Transverse colon (tissue), 4 donors: ENCODE measurements at regions of chr3 and their contacts with region 1.

Region 1: DNA sequence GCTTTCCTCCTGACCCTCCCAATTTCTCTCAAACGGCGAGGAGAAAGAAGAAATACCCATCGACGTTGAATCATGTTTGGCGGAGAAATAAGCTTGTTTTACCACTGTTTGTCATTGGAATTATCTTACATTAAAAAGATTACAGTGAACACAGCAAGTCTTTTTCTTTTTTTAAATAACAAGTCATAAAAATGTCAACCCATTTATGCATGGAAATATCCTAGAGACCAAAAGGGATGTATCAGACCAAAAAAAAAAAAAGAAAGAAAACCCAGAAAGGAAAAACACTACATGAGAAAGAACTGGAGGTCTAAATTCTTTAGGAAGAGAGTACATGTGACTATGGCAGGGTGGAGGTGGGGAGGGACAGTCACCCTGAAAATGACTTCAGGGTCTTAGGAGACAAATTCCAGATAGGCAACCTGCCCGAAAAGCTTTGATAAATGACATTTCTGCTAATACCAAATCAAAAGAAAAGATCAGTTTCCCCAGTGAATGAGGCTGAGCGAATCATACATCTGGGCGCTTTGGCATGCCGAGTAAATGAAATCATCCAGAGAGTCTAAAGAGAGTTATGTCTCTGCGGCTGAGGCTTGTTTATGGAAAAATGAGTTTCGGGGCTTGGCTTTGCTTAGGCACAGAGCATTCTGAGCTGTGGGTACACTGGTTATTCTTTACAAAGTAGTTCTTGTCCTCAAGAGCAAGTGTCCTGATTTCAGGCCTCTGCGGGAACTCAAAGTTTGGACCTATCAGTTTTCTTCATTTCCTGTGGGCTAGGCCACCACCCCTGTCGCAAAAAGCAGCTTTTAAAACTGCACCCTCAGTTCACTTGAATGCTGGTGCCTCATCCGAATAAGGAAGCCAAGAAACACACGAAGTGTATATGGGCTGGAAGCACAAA is 110.1 kb upstream of the TGFBR2 start:
- DNase-seq: peak; percentile 24
- H3K4me3 ChIP-seq: no peak overlapping the region
- H3K27ac ChIP-seq: peak overlapping the region; percentile 80 to 89 (median 83)
- H3K4me1 ChIP-seq: peaks cover 17 to 41% (median 21%) of the 10 kb centered on the region in 4 donors
- H3K27me3 ChIP-seq: no peaks in the 10 kb centered on the region
- CTCF ChIP-seq: no peak
- EP300 ChIP-seq: peak; percentile 61
- POLR2A ChIP-seq: no peak

Region 2: GRCh38 chr3:29850641-29851040 is 645.7 kb before region 1 on chr3:
- in situ Hi-C with region 1: no loop called
- intact Hi-C with region 1: loop called (anchors 5 kb)
- DNase-seq: no peak
- H3K4me3 ChIP-seq: no peak overlapping the region
- H3K27ac ChIP-seq: no peak overlapping the region
- H3K4me1 ChIP-seq: no peaks in the 10 kb centered on the region
- H3K27me3 ChIP-seq: no peaks in the 10 kb centered on the region
- CTCF ChIP-seq: no peak
- EP300 ChIP-seq: no peak
- POLR2A ChIP-seq: no peak

Region 3: DNA sequence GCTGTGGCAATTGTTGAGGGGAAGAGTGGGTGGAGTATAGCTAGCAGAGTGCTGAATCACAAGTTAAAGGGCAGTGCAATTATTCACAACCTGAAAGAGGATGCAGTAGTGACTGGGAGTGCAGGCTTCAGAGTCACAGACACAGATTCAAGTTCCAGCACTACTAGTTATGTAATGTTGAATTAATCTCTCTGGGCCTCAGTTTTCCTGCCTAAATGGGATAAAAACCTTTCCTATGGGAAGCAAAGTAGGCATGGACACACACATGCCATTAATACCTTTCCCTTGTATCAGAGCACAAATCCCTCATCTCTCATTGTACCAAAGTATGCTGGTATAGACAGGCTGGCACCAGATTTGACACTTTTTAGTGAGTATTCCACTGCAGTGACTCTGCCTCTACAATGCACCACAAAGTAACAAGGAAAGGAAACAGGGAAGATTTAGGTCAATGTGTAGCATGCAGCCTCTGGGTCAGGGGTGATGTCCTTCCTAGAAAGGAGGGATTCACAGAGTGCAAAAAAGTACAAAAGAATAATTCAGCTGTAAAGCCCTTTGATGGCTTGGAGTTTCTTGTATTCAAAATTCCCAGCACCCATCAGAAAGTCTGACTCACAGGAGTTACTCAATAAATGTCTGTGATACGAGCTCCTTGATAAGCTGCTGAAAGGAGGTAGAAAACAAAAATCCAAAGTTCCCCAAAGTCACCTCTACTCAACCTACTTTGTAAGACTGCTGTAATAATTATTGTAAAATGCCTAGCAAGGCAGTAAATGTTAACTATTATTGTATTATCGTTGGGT is 397.5 kb before region 1 on chr3:
- in situ Hi-C with region 1: no loop called
- intact Hi-C with region 1: no loop called
- DNase-seq: no peak
- H3K4me3 ChIP-seq: no peak overlapping the region
- H3K27ac ChIP-seq: no peak overlapping the region
- H3K4me1 ChIP-seq: peaks cover 0 to 8% (median 0%) of the 10 kb centered on the region in 4 donors
- H3K27me3 ChIP-seq: no peaks in the 10 kb centered on the region
- CTCF ChIP-seq: no peak
- EP300 ChIP-seq: no peak
- POLR2A ChIP-seq: no peak

Region 4: DNA sequence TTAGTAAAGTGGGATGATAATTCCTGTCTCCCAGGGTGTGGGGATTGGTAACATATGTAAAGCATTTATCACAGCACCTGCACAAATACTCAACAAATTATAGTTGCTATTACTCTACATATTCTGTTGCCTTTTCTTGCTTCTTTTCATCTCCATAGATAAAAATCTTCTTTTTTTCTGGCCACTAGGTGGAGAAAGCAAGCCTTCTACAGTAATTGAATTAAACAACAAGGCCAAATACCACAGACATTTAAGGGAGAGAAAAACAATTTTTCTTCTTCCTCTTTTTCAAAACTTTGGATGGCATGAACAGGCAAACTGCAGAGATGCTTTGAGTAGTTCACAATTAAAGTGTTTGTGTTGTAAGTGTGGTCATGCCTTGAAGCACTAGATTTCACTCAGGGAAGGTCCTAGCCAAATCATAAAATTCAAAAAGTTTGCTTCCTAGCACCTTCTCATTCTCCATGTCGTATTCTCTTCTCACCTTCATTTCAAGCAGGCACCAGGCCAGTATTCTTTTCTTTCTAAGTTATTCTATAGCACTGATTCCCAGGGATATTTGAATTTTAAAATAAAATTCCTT is 383.3 kb before region 1 on chr3:
- in situ Hi-C with region 1: no loop called
- intact Hi-C with region 1: no loop called
- DNase-seq: no peak
- H3K4me3 ChIP-seq: no peak overlapping the region
- H3K27ac ChIP-seq: no peak overlapping the region
- H3K4me1 ChIP-seq: peaks cover 0 to 22% (median 9%) of the 10 kb centered on the region in 4 donors
- H3K27me3 ChIP-seq: no peaks in the 10 kb centered on the region
- CTCF ChIP-seq: peak; percentile 58 to 76 (median 65)
- EP300 ChIP-seq: no peak
- POLR2A ChIP-seq: no peak

Region 5: DNA sequence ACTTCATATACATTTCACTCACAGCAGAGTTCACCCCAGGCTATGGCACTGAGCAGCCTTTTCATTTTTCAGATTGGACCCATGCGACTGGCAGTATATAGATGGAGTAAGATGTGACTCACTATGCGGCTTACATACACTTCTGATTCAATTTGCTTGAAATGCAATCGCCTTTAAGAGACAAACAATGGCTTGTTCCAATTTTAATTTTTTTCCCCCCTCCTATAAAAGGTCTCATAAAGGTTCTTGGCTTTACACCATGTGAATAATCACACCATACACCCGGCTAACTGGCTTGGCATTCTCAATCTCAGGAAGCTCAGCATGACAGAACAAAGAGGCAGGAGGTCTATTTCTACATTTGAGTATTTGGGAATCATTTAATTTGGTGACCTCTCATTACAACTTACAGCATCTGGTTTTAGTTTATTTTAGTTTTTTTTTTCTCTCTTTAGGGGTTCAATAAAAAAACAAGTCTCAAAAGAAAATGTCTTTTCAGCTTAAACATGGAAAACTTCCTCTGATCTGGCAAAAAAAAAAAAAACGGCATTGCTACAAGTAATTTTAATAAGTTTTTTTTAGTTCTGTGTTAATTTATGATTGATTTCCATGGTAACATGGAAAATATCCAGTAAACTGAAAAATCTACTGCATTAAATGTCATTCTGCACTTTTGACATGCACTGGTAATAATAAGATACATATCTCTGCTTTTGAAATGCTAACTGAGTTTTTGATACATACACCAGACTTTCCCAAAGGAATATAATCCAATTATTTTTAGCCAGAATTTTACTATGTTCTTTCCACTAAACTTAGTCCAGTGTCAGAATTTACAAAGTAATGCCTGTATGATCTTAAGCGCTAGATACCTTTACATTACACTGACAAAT is 359.3 kb after region 1 on chr3:
- in situ Hi-C with region 1: no loop called
- intact Hi-C with region 1: no loop called
- DNase-seq: no peak
- H3K4me3 ChIP-seq: no peak overlapping the region
- H3K27ac ChIP-seq: no peak overlapping the region
- H3K4me1 ChIP-seq: no peaks in the 10 kb centered on the region
- H3K27me3 ChIP-seq: no peaks in the 10 kb centered on the region
- CTCF ChIP-seq: no peak
- EP300 ChIP-seq: no peak
- POLR2A ChIP-seq: no peak